Endothelial cell of umbilical vein (primary cell): ENCODE measurements at regions of chr10 and their contacts with region 1.

Region 1: DNA sequence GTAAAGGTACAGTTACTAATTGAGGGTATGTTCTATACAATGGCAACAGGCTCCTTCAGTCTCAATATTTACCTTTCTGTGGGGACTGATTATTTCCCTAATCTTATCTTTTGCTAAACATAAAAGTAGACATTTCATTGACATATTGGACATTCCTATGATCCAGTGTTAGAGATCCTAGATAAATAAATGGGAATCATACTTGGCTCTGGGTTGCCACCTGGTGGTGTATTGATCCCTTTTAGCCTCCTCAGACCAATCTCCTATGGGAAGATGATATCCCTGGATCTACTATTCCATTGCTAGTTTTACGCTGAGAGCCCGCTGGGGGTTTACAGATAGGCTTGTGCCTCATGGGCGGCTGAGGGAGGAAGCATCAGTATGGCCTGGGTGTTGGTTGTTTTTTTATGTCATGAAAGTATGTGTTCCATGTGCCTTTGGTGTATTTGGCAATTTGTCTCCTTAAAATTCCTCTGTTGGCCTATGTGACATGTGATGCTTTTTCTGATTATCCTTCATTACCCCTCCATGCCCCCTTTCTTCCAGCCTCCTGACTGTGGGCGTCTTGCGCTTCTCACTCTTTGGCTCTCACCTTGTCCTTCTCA is 18.8 kb downstream of the CELF2 start:
- DNase-seq: peak; percentile 84
- H3K4me3 ChIP-seq: no peak overlapping the region
- H3K27ac ChIP-seq: peak overlapping the region; percentile 92
- H3K4me1 ChIP-seq: peaks cover 19% of the 10 kb centered on the region
- H3K27me3 ChIP-seq: no peaks in the 10 kb centered on the region
- CTCF ChIP-seq: peak; percentile 64 to 67
- POLR2A ChIP-seq: no peak

Region 2: GRCh38 chr10:9331583-9332008 is 1704.9 kb before region 1 on chr10:
- CTCF ChIA-PET with region 1: interaction called, 7 read pairs
- POLR2A ChIA-PET with region 1: no interaction called
- dilution Hi-C with region 1: no loop called
- intact Hi-C with region 1: loop called (anchors 1 kb)
- DNase-seq: peak; percentile 62
- H3K4me3 ChIP-seq: no peak overlapping the region
- H3K27ac ChIP-seq: no peak overlapping the region
- H3K4me1 ChIP-seq: no peaks in the 10 kb centered on the region
- H3K27me3 ChIP-seq: peaks cover 0 to 2% of the 10 kb centered on the region in 2 experiments
- CTCF ChIP-seq: peak; percentile 37 to 54
- POLR2A ChIP-seq: no peak

Region 3: GRCh38 chr10:10138685-10139084 is 897.8 kb before region 1 on chr10:
- CTCF ChIA-PET with region 1: no interaction called
- POLR2A ChIA-PET with region 1: no interaction called
- dilution Hi-C with region 1: no loop called
- intact Hi-C with region 1: loop called (anchors 5 kb)
- DNase-seq: no peak
- H3K4me3 ChIP-seq: peak overlapping the region in 1 of 3 experiments; percentile 30
- H3K27ac ChIP-seq: no peak overlapping the region
- H3K4me1 ChIP-seq: no peaks in the 10 kb centered on the region
- H3K27me3 ChIP-seq: no peaks in the 10 kb centered on the region
- CTCF ChIP-seq: no peak
- POLR2A ChIP-seq: no peak

Region 4: DNA sequence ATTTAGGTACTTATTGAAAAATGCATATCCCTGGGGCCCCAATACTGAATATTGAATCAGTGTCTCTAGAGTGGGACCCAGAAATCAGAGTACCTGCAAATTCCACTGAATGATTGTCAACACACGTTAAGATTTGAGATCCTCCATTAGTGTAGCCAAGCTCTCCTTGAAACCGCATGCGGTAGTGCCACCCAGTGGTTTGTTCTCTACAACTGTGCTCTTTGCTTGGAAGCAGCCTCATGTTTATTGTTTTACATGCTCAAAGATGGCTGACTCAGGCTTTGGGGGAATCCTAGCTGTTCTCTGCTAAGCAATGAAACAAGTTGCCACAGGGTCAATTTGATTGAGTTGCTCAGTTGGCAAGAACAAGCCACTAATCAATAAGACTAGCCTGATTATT is 359.0 kb before region 1 on chr10:
- CTCF ChIA-PET with region 1: interaction called, 16 read pairs
- POLR2A ChIA-PET with region 1: no interaction called
- dilution Hi-C with region 1: no loop called
- intact Hi-C with region 1: loop called (anchors 2 kb)
- DNase-seq: peak; percentile 50
- H3K4me3 ChIP-seq: no peak overlapping the region
- H3K27ac ChIP-seq: no peak overlapping the region
- H3K4me1 ChIP-seq: no peaks in the 10 kb centered on the region
- H3K27me3 ChIP-seq: no peaks in the 10 kb centered on the region
- CTCF ChIP-seq: peak; percentile 19 to 25
- POLR2A ChIP-seq: no peak

Region 5: GRCh38 chr10:10798102-10798863 is 238.2 kb before region 1 on chr10:
- CTCF ChIA-PET with region 1: interaction called, 12 read pairs
- POLR2A ChIA-PET with region 1: interaction called, 3 read pairs
- dilution Hi-C with region 1: no loop called
- intact Hi-C with region 1: loop called (anchors 2 kb)
- DNase-seq: peak; percentile 49
- H3K4me3 ChIP-seq: no peak overlapping the region
- H3K27ac ChIP-seq: peak overlapping the region; percentile 88
- H3K4me1 ChIP-seq: peaks cover 34% of the 10 kb centered on the region
- H3K27me3 ChIP-seq: no peaks in the 10 kb centered on the region
- CTCF ChIP-seq: no peak
- POLR2A ChIP-seq: peak; percentile 25

Region 6: GRCh38 chr10:11012421-11013295 is 23.9 kb before region 1 on chr10:
- CTCF ChIA-PET with region 1: interaction called, 36 read pairs
- POLR2A ChIA-PET with region 1: no interaction called
- dilution Hi-C with region 1: no loop called
- intact Hi-C with region 1: no loop called
- DNase-seq: no peak
- H3K4me3 ChIP-seq: no peak overlapping the region
- H3K27ac ChIP-seq: no peak overlapping the region
- H3K4me1 ChIP-seq: no peaks in the 10 kb centered on the region
- H3K27me3 ChIP-seq: peaks cover 0 to 4% of the 10 kb centered on the region in 2 experiments
- CTCF ChIP-seq: no peak
- POLR2A ChIP-seq: no peak

Region 7: DNA sequence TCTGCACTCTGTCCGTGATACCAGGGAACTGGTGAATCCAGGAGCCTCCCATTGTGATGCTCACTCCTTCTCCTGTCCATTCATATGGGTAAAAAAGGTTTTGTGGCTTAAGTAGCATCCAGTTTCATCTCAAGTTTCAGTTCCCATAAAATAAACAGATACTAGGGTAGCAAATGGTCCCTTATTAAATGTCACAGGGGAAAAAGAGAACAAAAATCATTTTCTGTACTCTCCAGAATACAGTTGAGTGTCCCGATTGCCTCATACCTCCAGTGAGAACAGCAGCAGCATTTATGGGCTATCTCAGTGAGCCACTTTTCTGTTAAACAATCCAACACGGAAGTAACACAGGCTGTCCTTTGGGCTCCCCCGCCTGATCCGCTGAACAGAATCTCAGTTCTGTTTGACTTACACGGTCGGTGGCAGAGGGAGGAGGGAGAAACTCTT is 160.8 kb after region 1 on chr10:
- CTCF ChIA-PET with region 1: no interaction called
- POLR2A ChIA-PET with region 1: no interaction called
- dilution Hi-C with region 1: no loop called
- intact Hi-C with region 1: no loop called
- DNase-seq: no peak
- H3K4me3 ChIP-seq: no peak overlapping the region
- H3K27ac ChIP-seq: no peak overlapping the region
- H3K4me1 ChIP-seq: no peaks in the 10 kb centered on the region
- H3K27me3 ChIP-seq: no peaks in the 10 kb centered on the region
- CTCF ChIP-seq: no peak
- POLR2A ChIP-seq: no peak

Region 8: GRCh38 chr10:11209830-11210181 is 173.3 kb after region 1 on chr10:
- CTCF ChIA-PET with region 1: interaction called, 8 read pairs
- POLR2A ChIA-PET with region 1: interaction called, 4 read pairs
- dilution Hi-C with region 1: no loop called
- intact Hi-C with region 1: loop called (anchors 2 kb)
- DNase-seq: peak; percentile 85
- H3K4me3 ChIP-seq: no peak overlapping the region
- H3K27ac ChIP-seq: peak overlapping the region; percentile 71
- H3K4me1 ChIP-seq: peaks cover 36% of the 10 kb centered on the region
- H3K27me3 ChIP-seq: no peaks in the 10 kb centered on the region
- CTCF ChIP-seq: no peak
- POLR2A ChIP-seq: no peak